ENCODE measurements at regions of chr2 and their contacts with region 1.

Region 1: GRCh38 chr2:239934571-239935171 is 90.5 kb downstream of the NDUFA10 start:
- DNase-seq: peak; percentile 90
- H3K4me3 Mint-ChIP-seq: no peak overlapping the region
- H3K27ac Mint-ChIP-seq: no peak overlapping the region
- H3K4me1 Mint-ChIP-seq: peaks cover 2% of the 10 kb centered on the region
- H3K27me3 Mint-ChIP-seq: no peaks in the 10 kb centered on the region

Region 2: GRCh38 chr2:239991689-239992314 is 57.1 kb after region 1 on chr2:
- intact Hi-C with region 1: loop called (anchors 1 kb)
- DNase-seq: peak; percentile 73
- H3K4me3 Mint-ChIP-seq: no peak overlapping the region
- H3K27ac Mint-ChIP-seq: no peak overlapping the region
- H3K4me1 Mint-ChIP-seq: no peaks in the 10 kb centered on the region
- H3K27me3 Mint-ChIP-seq: no peaks in the 10 kb centered on the region

Measured in activated CD4-positive, alpha-beta T cell treated with anti-CD3 and anti-CD28 coated beads, Interleukin-2, amount 10 ng/mL, durations not matched to agents 24 days and 14 days (primary cell).